Sigmoid colon (tissue), 7 donors: ENCODE measurements at regions of chr10 and their contacts with region 1.

Region 1: GRCh38 chr10:80504158-80504811 is 33.4 kb upstream of the SH2D4B start:
- DNase-seq: no peak
- H3K4me3 ChIP-seq: no peak overlapping the region
- H3K27ac ChIP-seq: peak overlapping the region; percentile 50 to 71 (median 58)
- H3K4me1 ChIP-seq: peaks cover 0 to 53% (median 46%) of the 10 kb centered on the region in 4 donors
- H3K27me3 ChIP-seq: no peaks in the 10 kb centered on the region
- CTCF ChIP-seq: no peak
- EP300 ChIP-seq: no peak
- POLR2A ChIP-seq: no peak

Region 2: GRCh38 chr10:80382989-80383388 is 121.3 kb before region 1 on chr10:
- intact Hi-C with region 1: loop called (anchors 2 kb)
- DNase-seq: no peak
- H3K4me3 ChIP-seq: no peak overlapping the region
- H3K27ac ChIP-seq: no peak overlapping the region
- H3K4me1 ChIP-seq: no peaks in the 10 kb centered on the region
- H3K27me3 ChIP-seq: no peaks in the 10 kb centered on the region
- CTCF ChIP-seq: peak; percentile 39 to 49 (median 46)
- EP300 ChIP-seq: no peak
- POLR2A ChIP-seq: no peak

Region 3: DNA sequence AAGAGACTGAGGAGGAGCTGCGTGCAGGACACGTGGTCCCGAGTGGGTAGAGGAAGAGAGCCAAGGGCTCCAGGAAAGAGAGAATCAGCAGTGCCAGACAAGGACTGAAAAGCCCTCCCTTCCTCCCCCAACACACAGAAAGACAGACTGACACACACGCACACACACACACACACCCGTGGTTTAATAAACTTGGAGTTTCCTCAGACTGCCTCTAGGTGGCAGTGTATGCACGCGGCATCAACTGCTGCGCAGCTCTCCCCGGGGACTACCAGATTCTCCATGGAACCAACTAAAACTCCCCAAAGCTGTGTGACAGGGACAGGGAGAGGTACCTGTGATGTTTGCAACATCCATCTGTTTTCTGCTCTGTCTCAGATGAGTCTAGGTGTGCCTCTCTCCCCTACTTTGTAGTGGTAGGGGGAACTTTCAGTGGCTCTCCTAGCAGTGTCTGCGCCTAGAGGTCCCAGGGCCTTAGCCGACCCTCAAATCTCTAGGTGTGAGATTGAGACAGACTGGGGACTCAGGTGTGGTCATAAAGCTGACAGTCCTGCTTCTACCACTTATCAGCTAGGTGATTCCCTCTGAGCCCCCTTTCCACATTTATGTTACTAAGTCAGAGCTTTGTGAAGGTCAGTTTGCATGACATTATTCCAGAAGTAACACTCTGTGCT is 59.5 kb before region 1 on chr10:
- intact Hi-C with region 1: loop called (anchors 1 kb)
- DNase-seq: peak; percentile 79
- H3K4me3 ChIP-seq: no peak overlapping the region
- H3K27ac ChIP-seq: no peak overlapping the region
- H3K4me1 ChIP-seq: peaks cover 0 to 9% (median 0%) of the 10 kb centered on the region in 4 donors
- H3K27me3 ChIP-seq: no peaks in the 10 kb centered on the region
- CTCF ChIP-seq: peak; percentile 42 to 83 (median 82)
- EP300 ChIP-seq: no peak
- POLR2A ChIP-seq: no peak